Breast epithelium (tissue), 4 donors: ENCODE measurements at regions of chr11 and their contacts with region 1.

Region 1: DNA sequence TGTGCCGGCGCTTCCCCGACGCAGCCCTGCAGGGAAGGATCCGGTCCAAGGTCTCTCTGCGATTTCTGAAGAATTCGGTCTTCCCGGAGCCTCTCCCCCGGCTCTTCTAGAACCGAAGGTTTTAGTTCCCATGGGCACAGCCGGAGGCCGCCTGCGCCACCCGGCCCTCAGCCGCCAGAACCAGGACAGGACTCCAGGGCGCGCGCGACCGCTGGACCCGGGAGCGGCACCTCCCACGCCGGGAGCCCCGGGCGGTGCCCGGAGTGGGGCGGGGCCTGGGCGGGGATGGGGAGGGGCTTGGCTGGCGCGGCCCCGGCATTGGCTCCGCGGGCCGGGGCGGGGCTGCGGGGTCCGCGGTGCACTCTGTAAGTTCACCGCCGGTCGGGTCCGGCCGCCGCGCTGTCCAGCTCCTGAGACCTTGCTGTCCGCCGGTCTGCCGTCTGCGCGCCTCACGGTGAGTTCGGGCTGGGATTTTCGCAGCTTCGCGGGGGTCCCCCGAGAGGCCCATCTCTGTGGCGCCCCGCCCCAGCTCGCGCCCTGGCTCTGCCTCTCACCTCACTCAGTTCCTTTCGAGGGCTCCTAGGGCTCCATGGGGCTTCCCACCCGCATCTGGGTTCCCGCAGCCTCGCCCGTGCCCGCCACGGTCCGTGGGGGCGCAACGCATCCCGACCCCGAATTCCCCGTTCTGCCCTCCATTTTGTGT is at the start of gene CDC42EP2:
- DNase-seq: peak; percentile 66 to 81
- H3K4me3 ChIP-seq: peak within 1 kb of the TSS; percentile 87 to 99 (median 98)
- H3K27ac ChIP-seq: peak within 1 kb of the TSS; percentile 84 to 94
- H3K4me1 ChIP-seq: peaks cover 9 to 15% of the 10 kb centered on the region in 2 donors
- H3K27me3 ChIP-seq: no peaks in the 10 kb centered on the region
- CTCF ChIP-seq: no peak
- POLR2A ChIP-seq: no peak
- total RNA-seq, gene CDC42EP2: 11.3 to 20.8 (median 13.4) TPM

Region 2: DNA sequence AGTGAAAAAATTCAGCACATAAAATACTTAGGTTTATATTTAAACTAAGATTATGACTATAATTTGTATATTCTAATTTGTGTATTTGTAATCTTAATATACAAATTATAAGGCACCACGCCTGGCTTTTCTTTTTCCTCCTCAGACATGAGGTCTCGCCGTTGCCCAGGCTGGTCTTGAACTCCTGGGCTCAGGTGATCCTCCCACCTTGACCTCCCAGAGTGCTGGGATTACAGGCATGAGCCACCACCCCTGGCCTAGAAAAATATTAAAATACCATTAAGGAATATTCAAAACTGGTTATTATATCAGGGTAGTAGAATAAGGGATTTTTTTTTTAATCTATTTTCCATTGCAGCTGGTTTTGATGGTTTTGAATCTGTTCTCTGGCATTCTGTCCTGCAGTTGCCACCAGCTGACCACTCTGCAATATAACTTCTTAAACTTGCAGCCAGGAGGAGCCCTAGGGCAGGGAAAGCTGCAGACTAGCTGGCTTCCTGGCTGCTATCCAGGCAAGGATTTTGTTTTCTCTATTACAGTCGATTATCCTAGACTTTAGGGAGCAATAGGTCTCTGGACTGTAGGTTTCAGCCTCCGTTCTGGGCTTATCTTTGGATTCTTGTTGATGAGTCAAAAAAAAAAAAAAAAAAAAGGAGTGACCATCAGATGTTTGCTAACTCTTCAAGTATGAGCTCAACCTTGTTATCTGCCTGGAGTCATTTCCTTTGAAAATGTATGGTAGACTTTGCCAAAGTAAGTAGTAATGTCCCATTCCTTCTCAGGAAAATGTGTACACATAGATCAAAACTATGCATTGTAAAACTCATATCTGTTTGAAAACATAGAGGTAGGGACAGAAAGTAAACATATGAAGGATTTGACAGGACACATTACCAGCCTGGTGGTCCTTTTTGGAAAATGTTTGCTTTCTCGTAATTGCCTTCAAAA is 39.6 kb before region 1 on chr11:
- intact Hi-C with region 1: loop called (anchors 5 kb)
- DNase-seq: peak; percentile 68 to 72
- H3K4me3 ChIP-seq: no peak overlapping the region
- H3K27ac ChIP-seq: peak overlapping the region in 1 of 2 donors; percentile 44
- H3K4me1 ChIP-seq: no peaks in the 10 kb centered on the region
- H3K27me3 ChIP-seq: no peaks in the 10 kb centered on the region
- CTCF ChIP-seq: peak; percentile 67 to 93 (median 86)
- POLR2A ChIP-seq: no peak